Activated CD4-positive, alpha-beta T cell treated with anti-CD3 and anti-CD28 coated beads for 36 hours (primary cell): ENCODE measurements at regions of chr11 and their contacts with region 1.

Region 1: DNA sequence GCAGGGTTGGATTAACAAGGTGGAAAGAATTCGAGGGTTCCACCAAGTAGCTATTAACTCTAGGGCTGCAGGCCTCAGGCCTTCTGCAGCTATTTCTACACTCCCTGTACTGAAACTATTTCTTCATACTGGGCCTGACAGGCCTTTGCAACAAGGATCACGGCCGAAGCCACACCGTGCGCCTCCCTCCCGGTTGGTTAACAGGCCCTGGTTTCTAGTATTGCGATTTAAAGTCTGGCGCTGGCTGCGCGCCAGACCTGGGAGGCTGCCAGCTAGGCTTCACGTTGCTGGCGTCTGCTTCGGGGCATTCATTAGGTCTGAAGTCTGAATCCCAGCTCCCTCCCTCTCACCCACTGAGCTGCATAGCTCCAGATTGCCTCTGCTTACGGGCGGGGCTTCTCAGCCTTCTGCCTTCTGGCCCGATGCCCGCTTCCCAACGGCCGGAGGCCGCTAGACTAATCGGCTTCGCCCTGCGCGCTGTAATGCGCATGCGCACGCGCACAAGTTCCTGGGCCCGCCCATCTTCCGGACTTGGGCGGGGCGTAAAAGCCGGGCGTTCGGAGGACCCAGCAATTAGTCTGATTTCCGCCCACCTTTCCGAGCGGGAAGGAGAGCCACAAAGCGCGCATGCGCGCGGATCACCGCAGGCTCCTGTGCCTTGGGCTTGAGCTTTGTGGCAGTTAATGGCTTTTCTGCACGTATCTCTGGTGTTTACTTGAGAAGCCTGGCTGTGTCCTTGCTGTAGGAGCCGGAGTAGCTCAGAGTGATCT is 1.6 kb downstream of the LDHA start:
- DNase-seq: peak; percentile 96
- ATAC-seq: peak; percentile 65
- H3K4me3 Mint-ChIP-seq: peak overlapping the region; percentile 97
- H3K27ac Mint-ChIP-seq: peak overlapping the region; percentile 99
- H3K4me1 Mint-ChIP-seq: peaks cover 65% of the 10 kb centered on the region
- H3K27me3 Mint-ChIP-seq: no peaks in the 10 kb centered on the region

Region 2: GRCh38 chr11:16738193-16738946 is 1657.5 kb before region 1 on chr11 and contains the start of gene C11orf58:
- CTCF ChIA-PET with region 1: no interaction called
- POLR2A ChIA-PET with region 1: no interaction called
- intact Hi-C with region 1: loop called in 1 of 2 experiments (anchors 2 kb)
- DNase-seq: peak; percentile 96
- ATAC-seq: peak; percentile 97
- H3K4me3 Mint-ChIP-seq: no peak within 1 kb of the TSS
- H3K27ac Mint-ChIP-seq: peak within 1 kb of the TSS; percentile 92
- H3K4me1 Mint-ChIP-seq: peaks cover 23% of the 10 kb centered on the region
- H3K27me3 Mint-ChIP-seq: no peaks in the 10 kb centered on the region
- total RNA-seq, gene C11orf58: 142 to 193 TPM

Region 3: GRCh38 chr11:18383388-18384156 is 12.3 kb before region 1 on chr11:
- CTCF ChIA-PET with region 1: interaction called, 32 read pairs
- POLR2A ChIA-PET with region 1: interaction called, 103 read pairs
- intact Hi-C with region 1: loop called (anchors 1 kb)
- DNase-seq: peak; percentile 89
- ATAC-seq: peak; percentile 96
- H3K4me3 Mint-ChIP-seq: peak overlapping the region; percentile 59
- H3K27ac Mint-ChIP-seq: peak overlapping the region; percentile 98
- H3K4me1 Mint-ChIP-seq: peaks cover 42% of the 10 kb centered on the region
- H3K27me3 Mint-ChIP-seq: no peaks in the 10 kb centered on the region

Region 4: DNA sequence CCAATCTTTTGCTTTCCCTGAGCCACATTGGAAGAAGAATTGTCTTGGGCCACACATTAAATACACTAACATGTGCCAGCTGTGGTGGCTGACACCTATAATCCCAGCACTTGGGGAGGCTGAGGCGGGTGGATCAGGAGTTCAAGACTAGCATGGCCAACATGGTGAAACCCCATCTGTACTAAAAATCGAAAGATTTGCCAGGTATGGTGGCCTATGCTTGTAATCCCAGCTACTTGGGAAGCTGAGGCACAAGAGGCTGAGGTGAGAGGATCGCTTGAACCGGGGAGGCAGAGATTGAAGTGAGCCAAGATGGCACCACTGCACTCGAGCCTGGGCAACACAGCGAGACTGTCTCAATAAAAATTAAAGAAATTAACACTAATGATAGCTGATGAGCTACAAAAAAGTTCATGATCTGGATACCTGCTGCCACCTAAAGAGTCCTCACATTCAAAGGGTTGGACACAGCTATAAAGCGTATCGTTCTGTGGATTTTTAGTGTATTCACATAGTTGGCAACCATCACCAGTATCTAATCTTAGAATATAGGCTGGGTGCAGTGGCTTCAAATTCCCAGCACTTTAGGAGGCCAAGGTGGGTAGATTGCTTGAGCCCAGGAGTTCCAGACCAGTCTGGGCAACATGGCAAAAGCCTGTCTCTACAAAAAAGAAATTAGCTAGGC is 12.8 kb after region 1 on chr11:
- CTCF ChIA-PET with region 1: interaction called, 3 read pairs
- POLR2A ChIA-PET with region 1: interaction called, 8 read pairs
- intact Hi-C with region 1: loop called in 1 of 2 experiments (anchors 1 kb)
- DNase-seq: peak; percentile 35
- ATAC-seq: peak; percentile 42
- H3K4me3 Mint-ChIP-seq: no peak overlapping the region
- H3K27ac Mint-ChIP-seq: no peak overlapping the region
- H3K4me1 Mint-ChIP-seq: peaks cover 12% of the 10 kb centered on the region
- H3K27me3 Mint-ChIP-seq: no peaks in the 10 kb centered on the region